H1 (cell line): ENCODE measurements at regions of chr17 and their contacts with region 1.

Region 1: DNA sequence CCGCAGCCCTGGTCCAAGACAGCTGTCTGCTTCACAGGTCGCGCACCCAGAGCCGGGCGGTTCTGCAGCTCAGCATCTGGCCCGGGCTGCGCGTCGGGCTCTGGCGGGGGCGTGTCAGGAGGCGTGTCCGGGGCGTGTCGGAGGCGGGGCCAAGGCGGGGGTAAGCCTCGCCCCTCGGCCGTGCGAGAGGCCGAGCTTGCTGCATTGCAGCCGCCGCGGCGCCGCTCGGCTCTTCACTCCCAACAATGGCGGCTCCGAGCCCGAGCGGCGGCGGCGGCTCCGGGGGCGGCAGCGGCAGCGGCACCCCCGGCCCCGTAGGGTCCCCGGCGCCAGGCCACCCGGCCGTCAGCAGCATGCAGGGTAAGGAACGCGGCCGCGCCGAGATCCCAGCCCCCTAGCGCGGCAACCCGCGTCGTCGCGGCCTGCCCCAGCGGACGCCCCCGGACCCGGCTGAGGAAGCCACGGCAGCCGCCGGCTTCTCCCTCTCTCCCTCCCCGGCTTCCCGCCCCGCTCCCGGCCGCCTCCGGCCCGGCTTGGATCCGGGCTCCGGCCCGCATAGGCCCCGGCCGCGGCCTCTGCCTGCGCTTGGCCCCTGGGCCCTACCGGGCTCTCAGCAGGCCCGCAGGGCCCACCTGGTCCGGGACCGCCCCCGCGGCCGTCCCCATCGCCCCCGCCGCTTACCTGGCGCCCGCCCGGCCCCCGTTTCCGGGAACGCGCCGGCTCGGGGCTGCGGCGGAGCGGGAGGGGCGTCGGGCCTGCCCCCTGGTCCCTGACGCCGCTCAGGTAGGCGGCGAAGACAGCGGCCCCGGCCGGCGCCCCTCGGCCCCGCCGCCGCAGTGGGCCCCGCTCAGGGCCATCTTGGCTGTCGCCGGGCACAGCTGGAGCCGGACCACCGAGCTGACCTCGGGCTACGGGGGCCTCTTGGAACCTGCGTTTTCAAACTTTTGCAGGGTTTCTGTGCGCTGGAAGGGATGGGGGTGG is at the start of gene MAP2K4:
- DNase-seq: peak; percentile 83 to 99
- H3K4me3 ChIP-seq: peak within 1 kb of the TSS; percentile 68 to 85 (median 77)
- H3K27ac ChIP-seq: peak within 1 kb of the TSS; percentile 76
- H3K4me1 ChIP-seq: peaks cover 0 to 3% (median 0%) of the 10 kb centered on the region in 4 experiments; a peak in 3 of 7 replicates
- H3K27me3 ChIP-seq: no peaks in the 10 kb centered on the region; a peak in 1 of 7 replicates
- CTCF ChIP-seq: no peak
- EP300 ChIP-seq: peak in 1 of 2 experiments; percentile 19; a peak in 1 of 3 replicates
- POLR2A ChIP-seq: peak; percentile 96 to 97
- RAD21 ChIP-seq: no peak
- total RNA-seq, gene MAP2K4: 37.3 and 39.1 TPM in 2 replicates

Region 2: GRCh38 chr17:12007466-12007865 is 13.5 kb before region 1 on chr17:
- CTCF ChIA-PET with region 1: no interaction called
- POLR2A ChIA-PET with region 1: interaction called, 15 read pairs
- DNase-seq: no peak
- H3K4me3 ChIP-seq: no peak overlapping the region
- H3K27ac ChIP-seq: no peak overlapping the region
- H3K4me1 ChIP-seq: no peaks in the 10 kb centered on the region
- H3K27me3 ChIP-seq: no peaks in the 10 kb centered on the region
- CTCF ChIP-seq: no peak
- EP300 ChIP-seq: no peak
- POLR2A ChIP-seq: no peak
- RAD21 ChIP-seq: no peak